Mammary epithelial cell (primary cell): ENCODE measurements at regions of chr2 and their contacts with region 1.

Region 1: DNA sequence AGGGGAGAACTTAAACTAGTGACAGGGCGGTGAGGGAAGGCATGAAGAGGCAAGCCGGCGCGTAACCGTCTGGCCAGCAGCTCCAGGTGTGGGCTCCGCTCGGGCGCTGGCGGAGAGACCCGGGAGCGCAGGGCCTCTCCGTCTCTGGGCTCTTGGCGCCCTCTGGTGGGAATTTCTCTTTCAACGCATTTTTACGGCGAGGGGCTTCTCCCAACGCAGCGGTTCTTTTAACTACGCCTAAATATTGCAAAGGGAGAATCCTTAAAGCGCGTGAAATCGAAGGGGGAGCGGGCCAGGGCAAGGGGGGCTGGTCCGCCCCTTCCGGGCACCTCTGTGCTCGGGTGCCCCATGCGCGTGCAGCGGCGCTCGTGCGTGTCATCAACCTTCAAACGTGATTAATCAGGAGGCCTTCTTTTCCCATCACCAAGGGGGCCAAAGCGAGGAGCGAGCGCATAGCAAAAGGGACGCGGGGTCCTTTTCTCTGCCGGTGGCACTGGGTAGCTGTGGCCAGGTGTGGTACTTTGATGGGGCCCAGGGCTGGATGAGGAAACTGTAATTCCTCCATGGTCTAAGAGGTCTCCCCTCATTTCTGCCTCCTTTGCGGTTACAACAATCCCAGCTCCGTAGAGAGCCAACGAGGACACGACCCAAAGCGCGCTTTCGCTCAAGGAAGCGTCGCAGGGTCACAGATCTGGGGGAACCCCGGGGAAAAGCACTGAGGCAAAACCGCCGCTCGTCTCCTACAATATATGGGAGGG is 762 bp upstream of the GAD1 start:
- DNase-seq: peak; percentile 64
- H3K4me3 ChIP-seq: peak overlapping the region; percentile 24 to 50 (median 48)
- H3K27ac ChIP-seq: no peak overlapping the region
- H3K4me1 ChIP-seq: peaks cover 29% of the 10 kb centered on the region
- H3K27me3 ChIP-seq: peaks cover 46% of the 10 kb centered on the region
- CTCF ChIP-seq: peak; percentile 44 to 79

Region 2: GRCh38 chr2:170235860-170236679 is 579.9 kb before region 1 on chr2:
- CTCF ChIA-PET with region 1: no interaction called
- dilution Hi-C with region 1: no loop called
- in situ Hi-C with region 1: no loop called
- intact Hi-C with region 1: loop called (anchors 1 kb)
- DNase-seq: peak; percentile 50
- H3K4me3 ChIP-seq: no peak overlapping the region
- H3K27ac ChIP-seq: no peak overlapping the region
- H3K4me1 ChIP-seq: no peaks in the 10 kb centered on the region
- H3K27me3 ChIP-seq: peaks cover 5% of the 10 kb centered on the region
- CTCF ChIP-seq: peak; percentile 62 to 66

Region 3: GRCh38 chr2:170396799-170397459 is 419.0 kb before region 1 on chr2:
- CTCF ChIA-PET with region 1: no interaction called
- dilution Hi-C with region 1: no loop called
- in situ Hi-C with region 1: loop called (anchors 10 kb)
- intact Hi-C with region 1: loop called (anchors 1 kb)
- DNase-seq: no peak
- H3K4me3 ChIP-seq: no peak overlapping the region
- H3K27ac ChIP-seq: no peak overlapping the region
- H3K4me1 ChIP-seq: no peaks in the 10 kb centered on the region
- H3K27me3 ChIP-seq: peaks cover 3% of the 10 kb centered on the region
- CTCF ChIP-seq: peak in 1 of 2 donors; percentile 55

Region 4: DNA sequence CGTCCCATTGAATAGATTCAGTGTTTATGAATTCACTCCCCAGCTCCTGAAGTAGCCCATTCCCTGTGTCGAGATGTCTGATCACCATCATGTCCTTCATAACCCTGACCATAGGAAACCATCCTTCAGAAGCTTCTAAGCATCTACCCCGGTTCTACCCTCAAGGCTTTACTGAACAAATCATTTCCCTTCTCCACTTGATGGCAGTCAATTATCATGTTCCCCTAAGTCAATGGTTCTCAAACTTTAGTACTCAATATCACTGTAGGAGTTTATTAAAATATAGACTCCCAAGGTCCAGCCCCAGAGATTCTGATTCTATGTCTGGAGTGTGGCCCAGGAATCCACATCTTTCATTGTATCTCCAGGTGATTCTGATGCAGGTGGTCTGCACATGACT is 329.2 kb before region 1 on chr2:
- CTCF ChIA-PET with region 1: no interaction called
- dilution Hi-C with region 1: no loop called
- in situ Hi-C with region 1: loop called in 1 of 2 experiments (anchors 10 kb)
- intact Hi-C with region 1: loop called (anchors 1 kb)
- DNase-seq: no peak
- H3K4me3 ChIP-seq: no peak overlapping the region
- H3K27ac ChIP-seq: no peak overlapping the region
- H3K4me1 ChIP-seq: no peaks in the 10 kb centered on the region
- H3K27me3 ChIP-seq: no peaks in the 10 kb centered on the region
- CTCF ChIP-seq: peak in 1 of 2 donors; percentile 30

Region 5: GRCh38 chr2:170770606-170771420 is 45.1 kb before region 1 on chr2:
- CTCF ChIA-PET with region 1: interaction called, 4 read pairs
- dilution Hi-C with region 1: no loop called
- in situ Hi-C with region 1: no loop called
- intact Hi-C with region 1: loop called (anchors 2 kb)
- DNase-seq: peak; percentile 84
- H3K4me3 ChIP-seq: peak overlapping the region; percentile 91 to 99 (median 95)
- H3K27ac ChIP-seq: peak overlapping the region; percentile 94
- H3K4me1 ChIP-seq: peaks cover 7% of the 10 kb centered on the region
- H3K27me3 ChIP-seq: no peaks in the 10 kb centered on the region
- CTCF ChIP-seq: no peak